PC-9 (cell line): ENCODE measurements at regions of chr3 and their contacts with region 1.

Region 1: GRCh38 chr3:153052096-153052460 is 109.9 kb upstream of the RAP2B start:
- DNase-seq: peak; percentile 77 to 100
- H3K4me3 ChIP-seq: peak overlapping the region; percentile 48; the same call in 1 of the 2 replicates
- H3K27ac ChIP-seq: peak overlapping the region; percentile 98
- H3K4me1 ChIP-seq: peaks cover 45% of the 10 kb centered on the region
- H3K27me3 ChIP-seq: no peaks in the 10 kb centered on the region
- CTCF ChIP-seq: no peak

Region 2: GRCh38 chr3:153072856-153073255 is 20.8 kb after region 1 on chr3:
- CTCF ChIA-PET with region 1: interaction called, 3 read pairs
- POLR2A ChIA-PET with region 1: no interaction called
- intact Hi-C with region 1: loop called (anchors 1 kb)
- DNase-seq: peak; percentile 61 to 69
- H3K4me3 ChIP-seq: no peak overlapping the region
- H3K27ac ChIP-seq: no peak overlapping the region
- H3K4me1 ChIP-seq: peaks cover 18% of the 10 kb centered on the region; the same call in 1 of the 2 replicates
- H3K27me3 ChIP-seq: no peaks in the 10 kb centered on the region
- CTCF ChIP-seq: no peak

Region 3: GRCh38 chr3:153130312-153130990 is 78.4 kb after region 1 on chr3:
- CTCF ChIA-PET with region 1: no interaction called
- POLR2A ChIA-PET with region 1: no interaction called
- intact Hi-C with region 1: loop called (anchors 2 kb)
- DNase-seq: peak in 1 of 2 experiments; percentile 93
- H3K4me3 ChIP-seq: no peak overlapping the region
- H3K27ac ChIP-seq: peak overlapping the region; percentile 90
- H3K4me1 ChIP-seq: peaks cover 21% of the 10 kb centered on the region
- H3K27me3 ChIP-seq: no peaks in the 10 kb centered on the region
- CTCF ChIP-seq: no peak

Region 4: DNA sequence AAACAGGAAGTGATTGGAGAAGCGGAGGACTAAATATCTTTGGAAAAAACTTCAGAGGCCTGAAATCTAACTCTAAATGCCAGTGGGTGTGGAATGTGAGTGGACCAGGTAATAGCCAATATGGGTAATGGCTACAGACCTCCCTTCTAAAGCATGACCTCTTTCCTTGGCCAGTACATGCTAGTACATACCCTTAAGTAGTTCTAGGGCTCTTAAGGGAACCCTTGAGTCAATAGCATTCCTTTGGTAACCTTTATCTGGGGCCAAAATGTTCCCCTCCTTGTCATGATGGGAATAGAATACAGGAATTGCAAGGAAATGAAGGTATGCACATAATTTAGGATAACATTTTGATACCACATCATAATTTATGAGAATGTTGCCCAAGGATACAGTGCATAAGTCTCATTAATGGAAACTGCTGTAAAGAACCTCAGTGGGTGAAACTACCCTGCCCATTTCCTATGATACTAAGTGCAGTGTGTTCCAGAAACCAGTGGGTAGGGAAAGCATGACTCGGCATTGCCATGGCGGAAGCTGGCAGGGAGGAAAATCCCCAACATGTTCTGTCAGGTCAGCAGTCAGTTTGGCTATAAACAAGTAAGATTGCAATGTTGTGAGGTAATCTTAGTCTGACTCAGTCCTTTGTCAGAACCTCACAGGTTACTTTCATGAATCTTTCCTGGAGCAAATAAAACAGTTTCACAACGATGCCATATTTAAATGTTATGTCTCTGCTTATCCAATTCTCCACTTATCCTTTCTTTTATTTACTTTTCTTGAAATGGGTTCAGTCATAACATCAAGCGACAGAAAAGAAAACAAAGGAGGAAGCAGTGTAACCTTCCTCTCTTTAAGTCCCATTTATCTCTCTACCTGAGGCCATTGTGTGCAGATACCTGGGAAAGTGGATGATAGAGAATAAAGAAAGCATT is 86.5 kb after region 1 on chr3:
- CTCF ChIA-PET with region 1: no interaction called
- POLR2A ChIA-PET with region 1: no interaction called
- intact Hi-C with region 1: loop called (anchors 1 kb)
- DNase-seq: peak; percentile 89 to 100
- H3K4me3 ChIP-seq: no peak overlapping the region
- H3K27ac ChIP-seq: peak overlapping the region; percentile 98
- H3K4me1 ChIP-seq: peaks cover 43% of the 10 kb centered on the region
- H3K27me3 ChIP-seq: no peaks in the 10 kb centered on the region
- CTCF ChIP-seq: no peak

Region 5: GRCh38 chr3:153829606-153830170 is 777.6 kb after region 1 on chr3:
- CTCF ChIA-PET with region 1: no interaction called
- POLR2A ChIA-PET with region 1: no interaction called
- intact Hi-C with region 1: loop called (anchors 2 kb)
- DNase-seq: no peak
- H3K4me3 ChIP-seq: no peak overlapping the region
- H3K27ac ChIP-seq: no peak overlapping the region; the same call in 1 of the 2 replicates
- H3K4me1 ChIP-seq: 0 out of 2 replicates have a peak, but pooled peaks cover 9% of the 10 kb centered on the region
- H3K27me3 ChIP-seq: no peaks in the 10 kb centered on the region
- CTCF ChIP-seq: no peak